PC-3 (cell line): ENCODE measurements at regions of chr7 and their contacts with region 1.

Region 1: DNA sequence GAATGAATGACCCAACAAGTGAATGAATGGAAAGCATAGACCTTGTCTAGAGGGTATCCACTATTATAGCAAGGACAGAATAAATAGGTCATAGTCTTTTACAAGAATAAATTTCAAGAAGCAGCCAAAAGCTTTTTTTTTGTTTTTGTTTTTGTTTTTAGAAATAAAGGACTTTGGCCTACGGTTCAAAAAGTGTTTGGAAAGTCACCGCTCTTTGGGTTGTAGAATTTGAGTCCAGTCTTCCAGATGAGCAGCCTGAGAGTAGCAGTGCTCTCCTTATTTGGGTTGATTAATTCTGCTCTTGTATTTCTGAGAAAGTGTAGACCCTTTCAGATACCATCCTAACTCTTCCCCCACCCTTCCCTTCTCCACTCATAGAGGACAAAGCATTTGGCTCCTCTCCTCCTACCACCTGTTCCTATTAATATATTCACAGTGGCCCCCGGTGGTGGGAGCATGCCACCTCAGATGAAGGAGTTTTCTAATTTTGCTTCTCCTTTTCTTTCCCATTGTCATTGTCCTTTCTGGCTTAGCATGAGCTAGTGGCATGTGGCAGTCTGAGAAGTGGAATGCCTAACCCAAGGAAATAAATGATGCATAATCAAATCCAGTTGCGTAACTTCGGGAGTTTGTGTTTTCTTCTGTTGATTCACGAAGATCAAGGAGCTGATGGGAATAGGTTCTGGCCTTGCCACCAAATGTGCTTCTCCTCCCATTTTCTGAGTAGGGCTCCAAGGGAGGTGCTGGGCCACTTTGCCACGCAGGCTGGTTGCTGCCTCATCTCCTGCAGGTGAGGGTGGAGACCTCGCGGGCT is 114.7 kb downstream of the CHN2 start:
- DNase-seq: peak; percentile 45
- ATAC-seq: peak; percentile 72
- H3K4me3 ChIP-seq: no peak overlapping the region
- H3K27ac ChIP-seq: no peak overlapping the region
- H3K4me1 ChIP-seq: peaks cover 16% of the 10 kb centered on the region
- H3K27me3 ChIP-seq: no peaks in the 10 kb centered on the region
- CTCF ChIP-seq: peak; percentile 59

Region 2: DNA sequence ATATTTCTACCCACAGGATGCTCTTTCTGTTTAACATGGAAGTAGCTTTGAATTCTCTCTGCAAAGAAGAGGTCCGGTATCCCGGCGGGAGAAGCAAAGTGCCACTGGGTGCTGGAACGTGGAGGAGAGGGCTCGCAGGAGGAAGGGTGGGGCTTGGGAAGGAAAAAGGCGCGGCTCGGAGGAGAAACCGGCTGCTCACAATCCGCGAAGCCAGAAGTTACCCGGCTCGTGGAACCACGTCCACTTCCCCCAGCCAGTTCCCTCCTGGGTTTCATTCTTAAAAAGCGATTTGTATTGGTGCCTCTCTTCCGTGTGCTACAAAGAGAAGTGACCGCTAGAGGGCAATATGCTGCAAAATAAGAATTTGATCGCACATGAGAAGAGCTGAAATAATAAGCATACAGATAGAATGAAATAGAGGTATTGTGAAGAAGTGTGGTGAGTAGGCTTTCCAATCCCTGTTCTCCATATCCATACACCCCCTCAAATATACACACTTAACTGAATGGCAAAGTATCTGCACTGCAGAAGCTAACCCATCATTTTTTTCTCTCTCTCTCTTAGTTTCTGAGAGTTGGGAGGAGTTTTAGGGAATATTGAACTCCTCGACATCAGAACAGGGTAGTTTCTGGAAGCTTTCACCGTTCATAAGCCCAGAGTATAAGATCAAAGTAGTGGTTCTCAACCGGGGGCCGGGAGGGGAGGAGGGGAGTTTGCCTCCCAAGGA is 382.2 kb before region 1 on chr7:
- CTCF ChIA-PET with region 1: interaction called, 4 read pairs
- POLR2A ChIA-PET with region 1: no interaction called
- intact Hi-C with region 1: loop called (anchors 10 kb)
- DNase-seq: peak; percentile 96
- ATAC-seq: peak; percentile 96
- H3K4me3 ChIP-seq: peak overlapping the region; percentile 75
- H3K27ac ChIP-seq: no peak overlapping the region
- H3K4me1 ChIP-seq: peaks cover 5% of the 10 kb centered on the region; the same call in 1 of the 2 replicates
- H3K27me3 ChIP-seq: no peaks in the 10 kb centered on the region
- CTCF ChIP-seq: peak; percentile 87

Region 3: GRCh38 chr7:28955718-28956619 is 353.3 kb before region 1 on chr7:
- CTCF ChIA-PET with region 1: no interaction called
- POLR2A ChIA-PET with region 1: no interaction called
- intact Hi-C with region 1: loop called (anchors 1 kb)
- DNase-seq: peak; percentile 80
- ATAC-seq: peak; percentile 64
- H3K4me3 ChIP-seq: peak overlapping the region; percentile 80
- H3K27ac ChIP-seq: no peak overlapping the region
- H3K4me1 ChIP-seq: 0 out of 2 replicates have a peak, but pooled peaks cover 9% of the 10 kb centered on the region
- H3K27me3 ChIP-seq: no peaks in the 10 kb centered on the region
- CTCF ChIP-seq: peak; percentile 58

Region 4: GRCh38 chr7:29113384-29114103 is 195.7 kb before region 1 on chr7:
- CTCF ChIA-PET with region 1: interaction called, 12 read pairs
- POLR2A ChIA-PET with region 1: no interaction called
- intact Hi-C with region 1: loop called (anchors 1 kb)
- DNase-seq: peak; percentile 89
- ATAC-seq: peak; percentile 90
- H3K4me3 ChIP-seq: peak overlapping the region; percentile 1; the same call in 1 of the 2 replicates
- H3K27ac ChIP-seq: peak overlapping the region; percentile 76
- H3K4me1 ChIP-seq: peaks cover 51% of the 10 kb centered on the region
- H3K27me3 ChIP-seq: no peaks in the 10 kb centered on the region
- CTCF ChIP-seq: peak; percentile 74